ENCODE measurements at regions of chr2 and their contacts with region 1.

Region 1: GRCh38 chr2:206693399-206694137 is 24.6 kb downstream of the DYTN start:
- DNase-seq: peak; percentile 55
- H3K4me3 ChIP-seq: no peak overlapping the region
- H3K27ac ChIP-seq: no peak overlapping the region
- H3K4me1 ChIP-seq: no peaks in the 10 kb centered on the region
- H3K27me3 ChIP-seq: no peaks in the 10 kb centered on the region
- CTCF ChIP-seq: peak; percentile 66 to 68

Region 2: DNA sequence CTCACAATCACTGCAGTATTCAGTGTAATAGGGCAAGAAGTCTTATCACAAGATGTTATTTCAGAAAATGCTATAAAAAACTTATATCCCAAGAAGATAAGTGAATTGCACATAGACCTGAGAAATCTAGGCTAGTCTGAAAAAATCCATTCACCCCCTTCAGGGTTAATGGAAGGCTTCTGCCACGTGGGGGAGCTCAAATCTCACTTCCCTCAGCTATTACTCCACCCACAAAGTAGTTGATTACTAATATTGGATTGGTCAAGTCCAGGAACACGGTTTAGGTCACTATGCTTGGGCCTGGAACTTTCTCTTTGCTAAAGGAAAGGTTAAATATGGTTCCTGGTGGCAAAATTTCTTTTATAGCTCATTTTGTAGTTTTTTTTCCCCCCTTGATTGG is 301.4 kb before region 1 on chr2:
- CTCF ChIA-PET with region 1: no interaction called
- dilution Hi-C with region 1: no loop called
- in situ Hi-C with region 1: no loop called
- intact Hi-C with region 1: loop called (anchors 1 kb)
- DNase-seq: peak; percentile 55
- H3K4me3 ChIP-seq: no peak overlapping the region
- H3K27ac ChIP-seq: no peak overlapping the region
- H3K4me1 ChIP-seq: no peaks in the 10 kb centered on the region
- H3K27me3 ChIP-seq: no peaks in the 10 kb centered on the region
- CTCF ChIP-seq: peak; percentile 75 to 79

Region 3: GRCh38 chr2:206556357-206556949 is 137.1 kb before region 1 on chr2:
- CTCF ChIA-PET with region 1: no interaction called
- dilution Hi-C with region 1: no loop called
- in situ Hi-C with region 1: no loop called
- intact Hi-C with region 1: loop called (anchors 10 kb)
- DNase-seq: peak; percentile 26
- H3K4me3 ChIP-seq: no peak overlapping the region
- H3K27ac ChIP-seq: no peak overlapping the region
- H3K4me1 ChIP-seq: no peaks in the 10 kb centered on the region
- H3K27me3 ChIP-seq: peaks cover 3% of the 10 kb centered on the region
- CTCF ChIP-seq: peak; percentile 57 to 58

Region 4: DNA sequence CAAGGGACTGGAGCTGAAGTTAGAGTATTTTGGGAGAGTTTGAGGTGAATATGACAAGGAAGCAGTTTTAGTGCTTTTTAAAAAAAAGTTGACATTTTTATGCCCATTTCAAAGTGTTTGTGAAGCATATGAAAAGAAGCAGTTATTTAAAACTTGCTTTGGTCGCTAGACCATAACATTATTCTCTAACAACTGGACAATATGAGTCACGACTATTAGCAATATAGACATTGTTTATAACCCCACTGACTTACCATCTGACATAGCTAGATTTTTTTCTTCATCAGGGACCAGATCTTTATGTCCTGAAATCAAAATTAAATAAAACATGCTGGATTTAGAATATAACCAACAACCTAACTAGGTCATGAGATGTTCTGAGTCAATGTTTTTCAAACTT is 47.2 kb after region 1 on chr2:
- CTCF ChIA-PET with region 1: no interaction called
- dilution Hi-C with region 1: loop called (anchors 5 kb)
- in situ Hi-C with region 1: no loop called
- intact Hi-C with region 1: no loop called
- DNase-seq: no peak
- H3K4me3 ChIP-seq: no peak overlapping the region
- H3K27ac ChIP-seq: no peak overlapping the region
- H3K4me1 ChIP-seq: no peaks in the 10 kb centered on the region
- H3K27me3 ChIP-seq: no peaks in the 10 kb centered on the region
- CTCF ChIP-seq: no peak

Region 5: GRCh38 chr2:206765242-206766056 is 71.9 kb after region 1 on chr2 and contains the starts of genes FASTKD2 and MDH1B:
- CTCF ChIA-PET with region 1: no interaction called
- dilution Hi-C with region 1: no loop called
- in situ Hi-C with region 1: no loop called
- intact Hi-C with region 1: loop called (anchors 5 kb)
- DNase-seq: peak; percentile 96
- H3K4me3 ChIP-seq: peak within 1 kb of the TSS; percentile 76 to 82 (median 79)
- H3K27ac ChIP-seq: peak within 1 kb of the TSS; percentile 98
- H3K4me1 ChIP-seq: peaks cover 12% of the 10 kb centered on the region
- H3K27me3 ChIP-seq: no peaks in the 10 kb centered on the region
- CTCF ChIP-seq: no peak
- total RNA-seq, gene FASTKD2: 32.6 to 45.0 TPM
- total RNA-seq, gene MDH1B: 0.54 to 1.8 TPM

Region 6: GRCh38 chr2:206783718-206784117 is 90.2 kb after region 1 on chr2:
- CTCF ChIA-PET with region 1: no interaction called
- dilution Hi-C with region 1: no loop called
- in situ Hi-C with region 1: loop called (anchors 5 to 10 kb)
- intact Hi-C with region 1: loop called (anchors 1 kb)
- DNase-seq: no peak
- H3K4me3 ChIP-seq: no peak overlapping the region
- H3K27ac ChIP-seq: no peak overlapping the region
- H3K4me1 ChIP-seq: no peaks in the 10 kb centered on the region
- H3K27me3 ChIP-seq: no peaks in the 10 kb centered on the region
- CTCF ChIP-seq: peak; percentile 55 to 59

Region 7: DNA sequence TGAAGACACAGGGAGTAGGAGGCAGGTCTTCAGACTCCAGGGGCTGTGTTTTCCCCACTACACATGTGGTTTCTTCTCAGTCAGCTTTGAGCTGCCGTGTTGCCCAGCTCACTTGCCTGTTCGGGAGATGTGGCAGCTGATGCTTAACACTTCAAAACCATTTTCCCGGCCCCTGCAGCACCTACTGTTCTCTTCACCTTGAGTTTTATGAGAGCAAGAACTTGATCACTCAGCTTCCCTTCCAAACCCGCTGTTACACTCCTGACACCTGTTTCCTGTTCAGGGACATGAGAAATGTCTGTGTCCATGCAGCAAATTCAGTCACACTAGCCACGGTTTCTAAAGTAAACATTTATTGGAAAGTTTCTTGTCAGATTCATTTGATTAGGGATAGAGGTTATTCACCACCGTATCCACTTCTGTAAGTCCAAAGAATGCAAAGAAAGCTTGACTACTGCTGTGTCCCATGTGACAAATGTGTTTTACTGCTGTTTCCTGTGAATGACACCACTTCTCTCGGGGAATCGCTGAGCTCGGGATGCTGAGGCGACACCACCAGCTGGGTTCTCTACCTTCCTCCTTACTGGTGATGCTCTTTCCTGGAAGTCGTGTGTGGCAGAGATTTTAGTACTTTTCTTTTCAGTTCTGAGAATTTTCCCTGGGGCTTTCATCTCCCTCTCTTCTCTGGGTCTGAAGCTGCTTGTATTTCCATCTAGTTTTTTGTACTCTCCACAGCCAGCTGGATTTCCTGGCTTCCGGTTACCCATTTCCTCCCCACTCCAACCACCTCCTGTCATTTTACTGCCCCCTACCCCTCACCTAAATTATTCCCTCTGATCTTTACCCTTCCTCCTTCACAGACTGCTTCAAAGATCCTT is 380.5 kb after region 1 on chr2:
- CTCF ChIA-PET with region 1: no interaction called
- dilution Hi-C with region 1: no loop called
- in situ Hi-C with region 1: no loop called
- intact Hi-C with region 1: loop called (anchors 10 kb)
- DNase-seq: no peak
- H3K4me3 ChIP-seq: no peak overlapping the region
- H3K27ac ChIP-seq: no peak overlapping the region
- H3K4me1 ChIP-seq: no peaks in the 10 kb centered on the region
- H3K27me3 ChIP-seq: no peaks in the 10 kb centered on the region
- CTCF ChIP-seq: no peak

Measured in mammary epithelial cell (primary cell).